Naive thymus-derived CD4-positive, alpha-beta T cell (primary cell): ENCODE measurements at regions of chr1 and their contacts with region 1.

Region 1: DNA sequence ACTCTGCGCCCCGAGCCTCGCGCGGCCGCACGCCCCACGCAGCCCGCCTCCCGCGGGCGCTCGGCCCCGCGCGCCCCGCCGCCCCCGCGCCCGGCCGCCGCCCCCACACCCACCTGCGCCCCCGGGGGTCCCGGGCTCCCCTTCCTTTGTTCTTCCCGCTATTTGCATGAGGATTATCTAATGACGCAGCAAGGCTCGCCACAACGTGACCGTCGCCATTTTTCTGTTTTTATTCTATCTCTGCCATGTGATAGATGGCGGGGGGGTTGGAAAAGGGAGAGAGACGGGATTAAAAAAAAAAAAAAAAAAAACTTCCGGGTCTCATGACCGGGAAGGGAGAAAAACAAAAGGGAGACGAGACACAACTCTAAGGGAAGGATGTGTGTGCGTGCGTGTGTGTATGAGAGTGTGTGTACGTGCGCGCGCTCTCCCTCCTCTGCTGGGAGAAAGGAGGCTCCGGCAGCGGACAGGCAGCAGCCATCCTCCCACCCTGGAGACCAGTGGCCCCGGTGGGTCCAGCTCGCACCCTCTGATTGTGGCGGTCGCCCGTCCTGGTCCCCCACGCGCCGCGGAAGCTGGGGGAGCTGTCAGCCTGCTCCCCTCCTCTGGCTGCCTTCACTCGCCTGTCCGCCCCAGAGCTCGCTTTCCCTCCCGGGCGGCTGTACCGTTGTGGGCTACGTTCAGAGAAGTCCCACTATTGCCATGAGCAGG is 80.4 kb upstream of the AK4 start:
- DNase-seq: peak; percentile 48 to 75 (median 67)
- ATAC-seq: peak; percentile 39
- H3K4me3 ChIP-seq: peak overlapping the region; percentile 78
- H3K4me3 Mint-ChIP-seq: peak overlapping the region; percentile 85 to 99 (median 97)
- H3K27ac ChIP-seq: peak overlapping the region; percentile 90
- H3K27ac Mint-ChIP-seq: peak overlapping the region; percentile 93 to 100 (median 100)
- H3K4me1 ChIP-seq: peaks cover 16 to 24% of the 10 kb centered on the region in 2 donors
- H3K4me1 Mint-ChIP-seq: peaks cover 43 to 62% (median 55%) of the 10 kb centered on the region in 7 donors
- H3K27me3 ChIP-seq: no peaks in the 10 kb centered on the region
- H3K27me3 Mint-ChIP-seq: no peaks in the 10 kb centered on the region

Region 2: GRCh38 chr1:64469977-64470664 is 597.5 kb before region 1 on chr1 and contains the start of gene CACHD1:
- CTCF ChIA-PET with region 1: no interaction called
- POLR2A ChIA-PET with region 1: no interaction called
- intact Hi-C with region 1: loop called in 1 of 2 experiments (anchors 10 kb)
- DNase-seq: peak; percentile 50 to 85 (median 68)
- ATAC-seq: peak; percentile 89
- H3K4me3 ChIP-seq: peak within 1 kb of the TSS; percentile 54
- H3K4me3 Mint-ChIP-seq: peak within 1 kb of the TSS; percentile 84 to 99 (median 94)
- H3K27ac ChIP-seq: peak within 1 kb of the TSS; percentile 59
- H3K27ac Mint-ChIP-seq: peak within 1 kb of the TSS in 8 of 9 donors; percentile 26 to 73 (median 68)
- H3K4me1 ChIP-seq: peaks cover 0 to 12% of the 10 kb centered on the region in 2 donors
- H3K4me1 Mint-ChIP-seq: peaks cover 13 to 50% (median 24%) of the 10 kb centered on the region in 7 donors
- H3K27me3 ChIP-seq: no peaks in the 10 kb centered on the region
- H3K27me3 Mint-ChIP-seq: peaks cover 28 to 67% (median 42%) of the 10 kb centered on the region in 5 donors
- total RNA-seq, gene CACHD1: 0.15 to 9.0 (median 3.4) TPM

Region 3: GRCh38 chr1:64624218-64624713 is 443.4 kb before region 1 on chr1:
- CTCF ChIA-PET with region 1: no interaction called
- POLR2A ChIA-PET with region 1: no interaction called
- intact Hi-C with region 1: no loop called
- DNase-seq: no peak
- ATAC-seq: no peak
- H3K4me3 ChIP-seq: no peak overlapping the region
- H3K4me3 Mint-ChIP-seq: no peak overlapping the region
- H3K27ac ChIP-seq: no peak overlapping the region
- H3K27ac Mint-ChIP-seq: no peak overlapping the region
- H3K4me1 ChIP-seq: no peaks in the 10 kb centered on the region
- H3K4me1 Mint-ChIP-seq: peaks cover 0 to 22% (median 5%) of the 10 kb centered on the region in 7 donors
- H3K27me3 ChIP-seq: no peaks in the 10 kb centered on the region
- H3K27me3 Mint-ChIP-seq: peaks cover 0 to 3% (median 0%) of the 10 kb centered on the region in 5 donors

Region 4: GRCh38 chr1:64966158-64966971 is 101.3 kb before region 1 on chr1 and contains the start of gene JAK1:
- CTCF ChIA-PET with region 1: interaction called, 4 read pairs
- POLR2A ChIA-PET with region 1: interaction called, 40 read pairs
- intact Hi-C with region 1: loop called (anchors 1 kb)
- DNase-seq: peak; percentile 79 to 94 (median 91)
- ATAC-seq: peak; percentile 91
- H3K4me3 ChIP-seq: peak within 1 kb of the TSS; percentile 93
- H3K4me3 Mint-ChIP-seq: peak within 1 kb of the TSS; percentile 90 to 97 (median 94)
- H3K27ac ChIP-seq: peak within 1 kb of the TSS; percentile 97
- H3K27ac Mint-ChIP-seq: peak within 1 kb of the TSS; percentile 91 to 99 (median 97)
- H3K4me1 ChIP-seq: peaks cover 31 to 41% of the 10 kb centered on the region in 2 donors
- H3K4me1 Mint-ChIP-seq: peaks cover 37 to 55% (median 49%) of the 10 kb centered on the region in 7 donors
- H3K27me3 ChIP-seq: no peaks in the 10 kb centered on the region
- H3K27me3 Mint-ChIP-seq: peaks cover 0 to 3% (median 0%) of the 10 kb centered on the region in 5 donors
- total RNA-seq, gene JAK1: 210 to 365 (median 265) TPM

Region 5: DNA sequence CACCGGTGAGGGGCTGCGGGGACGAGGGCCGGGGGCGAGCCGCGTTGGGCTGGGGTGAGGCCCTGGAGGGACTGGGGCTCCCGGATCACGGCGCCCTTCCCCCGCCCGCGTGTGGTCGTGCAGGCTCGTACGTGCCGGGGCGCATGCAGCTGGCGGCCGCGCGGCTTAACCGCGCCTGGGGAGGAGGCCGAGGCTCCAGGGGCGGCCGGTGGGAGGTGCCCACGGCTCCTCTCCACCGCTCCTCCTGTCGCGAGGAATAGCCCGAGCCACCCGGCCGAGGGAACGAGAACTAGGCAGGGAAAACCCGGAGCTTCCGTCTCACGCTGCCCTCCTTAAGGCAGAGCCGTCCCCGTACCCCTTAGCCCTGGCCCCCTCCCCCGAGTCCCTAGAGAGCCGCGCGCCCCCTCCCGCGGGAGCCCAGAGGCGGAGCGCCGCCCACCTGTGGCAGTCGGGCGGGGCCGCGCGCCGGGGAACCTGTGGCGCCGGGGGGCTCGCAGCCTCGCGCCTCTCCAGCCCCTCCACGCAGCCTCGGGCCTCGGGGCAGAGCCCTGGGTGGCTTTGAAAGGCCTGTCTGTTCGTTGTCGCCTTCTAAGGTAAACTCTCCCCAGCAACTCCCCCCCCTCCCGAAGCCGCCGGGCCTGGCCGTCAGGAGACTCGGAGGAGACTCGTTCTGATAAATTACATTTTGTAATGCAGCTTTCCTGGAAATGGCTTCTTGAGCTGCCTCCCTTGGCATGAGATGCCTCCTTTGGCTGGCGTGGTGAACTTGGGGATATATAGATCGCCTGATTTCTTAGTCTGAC is 81.1 kb after region 1 on chr1:
- CTCF ChIA-PET with region 1: no interaction called
- POLR2A ChIA-PET with region 1: no interaction called
- intact Hi-C with region 1: loop called in 1 of 2 experiments (anchors 2 kb)
- DNase-seq: peak in 6 of 9 donors; percentile 8 to 82 (median 18)
- ATAC-seq: peak; percentile 51
- H3K4me3 ChIP-seq: peak overlapping the region; percentile 45
- H3K4me3 Mint-ChIP-seq: peak overlapping the region; percentile 81 to 95 (median 86)
- H3K27ac ChIP-seq: no peak overlapping the region
- H3K27ac Mint-ChIP-seq: peak overlapping the region in 1 of 9 donors; percentile 81
- H3K4me1 ChIP-seq: peaks cover 0 to 6% of the 10 kb centered on the region in 2 donors
- H3K4me1 Mint-ChIP-seq: peaks cover 7 to 52% (median 14%) of the 10 kb centered on the region in 7 donors
- H3K27me3 ChIP-seq: peaks cover 0 to 6% of the 10 kb centered on the region in 2 donors
- H3K27me3 Mint-ChIP-seq: peaks cover 12 to 60% (median 53%) of the 10 kb centered on the region in 5 donors

Region 6: DNA sequence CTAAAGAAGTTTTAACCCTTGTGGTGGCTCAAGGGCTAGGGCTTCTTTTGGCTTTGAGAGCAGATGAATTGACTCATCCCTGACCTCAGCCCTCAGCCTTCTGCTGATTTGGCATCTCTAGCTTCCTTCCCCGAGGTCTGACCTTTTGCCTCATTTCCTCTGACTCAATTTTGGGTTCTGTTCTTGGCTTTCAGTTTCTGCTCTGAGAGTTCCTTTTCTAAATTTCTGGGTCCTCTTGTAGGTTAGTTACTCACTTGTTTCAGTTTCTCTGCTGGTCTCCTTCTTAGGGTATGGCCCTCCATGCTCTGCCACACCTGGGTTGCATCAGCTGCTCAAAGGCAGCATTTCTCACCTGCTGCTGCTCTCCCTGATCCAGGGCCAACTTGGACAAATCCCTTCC is 744.4 kb after region 1 on chr1:
- CTCF ChIA-PET with region 1: no interaction called
- POLR2A ChIA-PET with region 1: no interaction called
- intact Hi-C with region 1: loop called in 1 of 2 experiments (anchors 10 kb)
- DNase-seq: peak in 1 of 9 donors; percentile 67
- ATAC-seq: peak; percentile 94
- H3K4me3 ChIP-seq: no peak overlapping the region
- H3K4me3 Mint-ChIP-seq: peak overlapping the region in 1 of 10 donors; percentile 3
- H3K27ac ChIP-seq: no peak overlapping the region
- H3K27ac Mint-ChIP-seq: peak overlapping the region in 1 of 9 donors; percentile 67
- H3K4me1 ChIP-seq: no peaks in the 10 kb centered on the region
- H3K4me1 Mint-ChIP-seq: peaks cover 0 to 26% (median 0%) of the 10 kb centered on the region in 7 donors
- H3K27me3 ChIP-seq: no peaks in the 10 kb centered on the region
- H3K27me3 Mint-ChIP-seq: peaks cover 18 to 24% (median 19%) of the 10 kb centered on the region in 5 donors

Region 7: GRCh38 chr1:67053785-67054772 is 1986.4 kb after region 1 on chr1 and contains the start of gene SLC35D1:
- CTCF ChIA-PET with region 1: no interaction called
- POLR2A ChIA-PET with region 1: no interaction called
- intact Hi-C with region 1: loop called in 1 of 2 experiments (anchors 10 kb)
- DNase-seq: peak; percentile 65 to 88 (median 76)
- ATAC-seq: peak; percentile 86
- H3K4me3 ChIP-seq: peak within 1 kb of the TSS; percentile 87
- H3K4me3 Mint-ChIP-seq: peak within 1 kb of the TSS; percentile 90 to 97 (median 95)
- H3K27ac ChIP-seq: peak within 1 kb of the TSS; percentile 96
- H3K27ac Mint-ChIP-seq: peak within 1 kb of the TSS; percentile 80 to 99 (median 94)
- H3K4me1 ChIP-seq: peaks cover 6 to 13% of the 10 kb centered on the region in 2 donors
- H3K4me1 Mint-ChIP-seq: peaks cover 17 to 37% (median 30%) of the 10 kb centered on the region in 7 donors
- H3K27me3 ChIP-seq: no peaks in the 10 kb centered on the region
- H3K27me3 Mint-ChIP-seq: peaks cover 0 to 9% (median 0%) of the 10 kb centered on the region in 5 donors
- total RNA-seq, gene SLC35D1: 9.8 to 25.7 (median 15.4) TPM